Prostate gland (tissue), 2 donors: ENCODE measurements at regions of chr11 and their contacts with region 1.

Region 1: GRCh38 chr11:3947061-3947460 is 91.6 kb downstream of the STIM1 start:
- DNase-seq: peak; percentile 7
- H3K4me3 ChIP-seq: no peak overlapping the region
- H3K27ac ChIP-seq: peak overlapping the region; percentile 18 to 58
- H3K4me1 ChIP-seq: no peaks in the 10 kb centered on the region
- H3K27me3 ChIP-seq: no peaks in the 10 kb centered on the region
- CTCF ChIP-seq: no peak
- POLR2A ChIP-seq: no peak

Region 2: DNA sequence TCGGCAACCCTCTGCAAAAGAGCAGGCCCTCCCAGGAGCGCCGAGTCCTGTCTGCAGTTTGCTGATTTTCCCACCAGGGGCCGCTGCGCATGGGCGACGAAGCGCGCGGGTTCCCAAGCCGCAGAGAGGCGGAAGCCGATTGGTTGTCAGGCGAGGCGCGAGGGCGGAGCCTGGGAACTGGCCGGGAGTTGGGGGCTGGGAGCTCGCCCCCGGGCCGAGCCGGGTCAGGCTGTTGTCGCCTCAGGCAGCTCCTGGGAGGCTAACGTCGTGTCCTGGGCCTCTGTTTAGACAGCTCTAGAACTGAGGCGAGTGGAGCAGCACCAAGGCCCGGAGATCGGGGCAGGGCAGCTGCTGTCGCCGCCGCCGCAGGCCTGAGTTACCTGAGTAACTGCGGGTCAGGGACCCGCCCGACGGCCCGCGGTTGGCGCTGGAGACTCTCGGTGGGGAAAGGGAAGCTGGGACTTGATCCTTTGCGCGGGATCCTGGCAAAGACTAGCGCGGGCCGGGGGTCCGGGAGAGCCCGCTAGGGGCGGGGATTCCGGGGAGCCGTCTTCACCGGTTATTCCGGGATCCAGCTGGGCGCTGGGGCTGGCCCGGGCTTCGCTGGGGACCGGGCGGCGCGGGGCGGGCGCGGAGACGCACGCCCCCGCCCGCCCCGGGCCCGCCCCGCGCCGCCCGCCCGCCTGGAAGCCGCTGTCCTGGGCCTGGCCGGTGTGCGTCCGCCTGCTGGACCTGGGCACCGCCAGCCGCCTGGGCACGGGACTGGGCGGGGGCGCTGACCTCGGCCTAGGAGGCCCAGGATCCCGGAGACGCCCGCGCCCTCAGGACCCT is 91.9 kb before region 1 on chr11 and contains the start of gene STIM1:
- intact Hi-C with region 1: loop called (anchors 5 kb)
- DNase-seq: peak; percentile 92
- H3K4me3 ChIP-seq: peak within 1 kb of the TSS; percentile 92 to 97
- H3K27ac ChIP-seq: peak within 1 kb of the TSS; percentile 97 to 98
- H3K4me1 ChIP-seq: peaks cover 12% of the 10 kb centered on the region
- H3K27me3 ChIP-seq: no peaks in the 10 kb centered on the region
- CTCF ChIP-seq: peak; percentile 94 to 99 (median 98)
- POLR2A ChIP-seq: peak; percentile 72
- total RNA-seq, gene STIM1: 34.1 to 65.0 TPM

Region 3: DNA sequence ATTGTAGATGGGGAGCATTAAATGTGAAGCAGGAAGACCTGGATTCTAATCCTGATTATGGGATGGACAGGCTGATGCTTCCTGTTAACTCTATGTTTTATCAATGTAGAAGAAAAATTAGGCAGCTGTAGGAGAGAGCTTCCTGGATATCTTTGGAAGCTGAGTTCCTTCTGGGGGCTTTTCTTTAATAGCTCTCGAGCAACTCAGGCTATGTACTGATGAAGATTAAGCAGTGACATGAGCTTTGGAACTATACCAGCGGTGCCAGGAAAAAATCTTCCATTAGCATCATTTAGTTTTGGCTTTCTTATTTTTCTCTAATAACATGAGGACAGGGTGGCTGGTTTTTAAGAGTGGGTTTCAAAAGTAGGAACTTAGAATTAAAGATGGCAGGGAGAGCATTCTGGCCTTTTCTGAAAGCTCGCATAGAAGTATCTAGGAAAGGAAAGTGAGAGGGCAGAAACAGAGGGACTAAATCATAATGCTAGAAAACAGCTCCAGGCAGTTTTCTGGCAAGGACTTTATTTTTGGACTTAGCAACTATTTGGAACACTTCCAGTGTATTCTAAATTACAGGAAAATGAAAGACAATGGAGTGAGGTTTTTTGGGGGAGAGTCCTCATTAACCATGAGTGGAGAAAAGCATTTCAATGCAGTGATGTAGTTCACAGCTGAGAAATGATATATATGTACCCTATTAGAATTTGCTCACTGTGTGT is 78.3 kb after region 1 on chr11:
- intact Hi-C with region 1: loop called (anchors 5 kb)
- DNase-seq: no peak
- H3K4me3 ChIP-seq: no peak overlapping the region
- H3K27ac ChIP-seq: peak overlapping the region; percentile 19 to 20
- H3K4me1 ChIP-seq: no peaks in the 10 kb centered on the region
- H3K27me3 ChIP-seq: no peaks in the 10 kb centered on the region
- CTCF ChIP-seq: no peak
- POLR2A ChIP-seq: no peak

Region 4: GRCh38 chr11:4072668-4073285 is 125.7 kb after region 1 on chr11:
- intact Hi-C with region 1: loop called (anchors 5 kb)
- DNase-seq: peak; percentile 72
- H3K4me3 ChIP-seq: no peak overlapping the region
- H3K27ac ChIP-seq: peak overlapping the region in 1 of 2 donors; percentile 24
- H3K4me1 ChIP-seq: no peaks in the 10 kb centered on the region
- H3K27me3 ChIP-seq: no peaks in the 10 kb centered on the region
- CTCF ChIP-seq: peak; percentile 53 to 94 (median 85)
- POLR2A ChIP-seq: no peak